Activated CD8-positive, alpha-beta T cell treated with anti-CD3 and anti-CD28 coated beads for 36 hours (primary cell): ENCODE measurements at regions of chr9 and their contacts with region 1.

Region 1: DNA sequence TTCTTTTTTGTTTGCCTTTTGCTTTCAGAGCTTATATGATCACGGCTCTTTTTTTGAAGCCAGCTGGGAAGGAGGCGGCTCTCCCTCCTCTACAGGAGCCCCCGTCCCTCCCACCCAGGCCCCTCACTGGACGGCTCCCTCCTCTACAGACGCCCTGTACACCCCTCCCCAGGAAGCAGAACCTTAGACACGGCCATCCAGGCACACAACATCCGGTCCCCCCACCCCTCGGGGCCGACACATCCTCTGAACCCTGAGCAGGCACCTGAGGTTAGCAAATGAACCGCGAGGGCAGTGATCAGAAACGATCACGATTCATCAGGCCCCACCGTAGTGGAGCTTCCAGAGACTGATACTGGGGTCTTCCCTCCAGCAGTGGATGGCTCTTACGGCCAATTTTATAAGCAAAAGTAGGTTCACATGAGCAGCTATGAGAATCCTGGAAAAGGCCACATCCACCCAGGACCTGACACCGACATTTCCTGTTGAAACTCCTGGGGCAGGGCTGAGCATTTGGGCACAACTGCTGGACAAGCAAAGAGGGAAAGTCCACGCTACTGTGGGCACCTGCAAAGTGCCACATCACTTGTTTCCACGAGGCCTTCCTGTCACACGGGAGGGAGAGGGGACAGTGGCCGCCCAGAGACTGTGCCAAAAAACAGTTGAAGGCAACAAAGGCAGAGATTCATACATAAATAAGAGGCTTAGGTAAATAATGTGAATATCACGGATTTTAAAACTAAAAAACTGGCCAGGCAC is 78.9 kb downstream of the SEMA4D start:
- DNase-seq: peak; percentile 92
- ATAC-seq: peak; percentile 52
- H3K4me3 Mint-ChIP-seq: peak overlapping the region; percentile 79
- H3K27ac Mint-ChIP-seq: peak overlapping the region; percentile 98
- H3K4me1 Mint-ChIP-seq: peaks cover 97% of the 10 kb centered on the region
- H3K27me3 Mint-ChIP-seq: no peaks in the 10 kb centered on the region
- CTCF ChIP-seq: no peak

Region 2: GRCh38 chr9:89466451-89467277 is 47.6 kb after region 1 on chr9:
- CTCF ChIA-PET with region 1: interaction called, 3 read pairs
- POLR2A ChIA-PET with region 1: interaction called, 9 read pairs
- intact Hi-C with region 1: loop called (anchors 5 kb)
- DNase-seq: peak; percentile 84
- ATAC-seq: peak; percentile 70
- H3K4me3 Mint-ChIP-seq: peak overlapping the region; percentile 68
- H3K27ac Mint-ChIP-seq: peak overlapping the region; percentile 95
- H3K4me1 Mint-ChIP-seq: peaks cover 92% of the 10 kb centered on the region
- H3K27me3 Mint-ChIP-seq: no peaks in the 10 kb centered on the region
- CTCF ChIP-seq: no peak